ENCODE measurements at regions of chr3 and their contacts with region 1.

Region 1: DNA sequence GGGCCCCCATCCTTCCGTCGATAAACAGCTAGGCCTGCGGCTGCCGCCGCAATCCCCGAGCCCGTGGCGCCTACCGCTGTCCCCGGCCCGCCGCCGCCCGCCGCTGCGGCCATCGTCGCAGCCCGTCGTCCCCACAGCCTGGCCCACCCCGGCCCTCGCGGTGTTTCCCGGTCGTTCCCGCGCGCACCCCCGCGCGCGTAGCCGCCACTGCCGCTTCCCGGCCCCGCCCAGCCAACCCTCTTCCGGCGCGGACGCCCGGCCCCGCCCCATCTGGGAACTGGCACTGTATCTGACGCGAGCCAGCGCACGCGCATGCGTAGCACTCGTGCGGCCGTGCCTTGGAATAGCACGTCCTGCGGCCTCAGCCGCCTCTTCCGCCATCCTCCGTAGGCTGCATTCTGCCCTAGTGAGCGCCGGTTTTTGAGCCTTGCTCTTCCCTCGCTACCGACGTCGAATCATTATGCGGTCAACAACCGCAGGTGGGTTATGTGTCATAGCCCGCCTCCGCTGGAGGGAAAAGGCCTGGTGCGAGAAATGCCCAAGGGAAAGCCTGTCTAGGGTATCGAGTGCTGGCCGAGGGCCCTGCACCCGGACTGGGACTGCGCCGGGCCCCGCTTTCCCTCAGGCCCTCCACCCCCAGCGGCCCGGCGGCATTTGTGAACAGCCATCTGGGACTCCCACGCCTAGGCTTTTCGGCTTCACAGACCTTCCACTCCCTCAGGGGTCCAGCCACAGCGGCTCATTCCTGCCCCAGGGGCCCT is at the start of gene SMARCC1:
- DNase-seq: peak; percentile 98
- H3K4me3 ChIP-seq: peak within 1 kb of the TSS; percentile 89 to 93 (median 89)
- H3K27ac ChIP-seq: peak within 1 kb of the TSS; percentile 88
- H3K4me1 ChIP-seq: peaks cover 13% of the 10 kb centered on the region
- H3K27me3 ChIP-seq: no peaks in the 10 kb centered on the region
- CTCF ChIP-seq: no peak
- total RNA-seq, gene SMARCC1: 52.8 to 94.1 TPM

Region 2: DNA sequence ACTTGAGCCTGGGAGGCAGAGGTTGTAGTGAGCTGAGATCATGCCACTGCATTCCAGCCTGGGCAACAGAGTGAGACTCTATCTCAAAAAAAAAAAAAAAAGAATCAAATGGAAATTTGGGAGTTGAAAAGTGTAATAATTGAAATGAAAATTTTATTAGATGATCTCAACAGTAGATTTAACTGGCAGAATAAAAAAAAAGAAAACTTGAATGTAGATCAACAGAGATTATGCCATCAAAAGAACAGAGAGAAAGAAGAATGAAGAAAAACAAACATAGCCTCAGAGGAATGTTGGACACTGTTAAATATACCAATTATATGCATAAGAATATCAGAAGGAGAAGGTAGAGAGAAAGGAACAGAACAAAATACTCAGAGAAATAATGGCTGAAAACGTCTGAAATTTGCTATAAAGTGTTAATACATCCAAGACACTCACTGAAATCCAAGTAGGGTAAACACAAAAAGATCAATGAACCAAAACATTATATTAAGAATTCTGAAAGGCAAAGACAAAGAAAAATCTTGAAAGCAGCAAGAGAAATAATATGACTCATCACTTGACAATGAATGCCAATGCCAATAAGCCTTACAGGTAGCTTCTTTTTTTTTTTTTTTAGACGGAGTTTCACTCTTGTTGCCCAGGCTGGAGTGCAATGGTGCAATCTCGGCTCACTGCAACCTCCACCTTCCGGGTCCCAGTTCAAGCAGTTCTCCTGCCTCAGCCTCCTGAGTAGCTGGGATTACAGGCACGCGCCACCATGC is 253.7 kb before region 1 on chr3:
- CTCF ChIA-PET with region 1: no interaction called
- dilution Hi-C with region 1: no loop called
- in situ Hi-C with region 1: loop called in 1 of 2 experiments (anchors 5 kb)
- intact Hi-C with region 1: no loop called
- DNase-seq: peak; percentile 56
- H3K4me3 ChIP-seq: no peak overlapping the region
- H3K27ac ChIP-seq: peak overlapping the region; percentile 44
- H3K4me1 ChIP-seq: no peaks in the 10 kb centered on the region
- H3K27me3 ChIP-seq: no peaks in the 10 kb centered on the region
- CTCF ChIP-seq: no peak

Region 3: DNA sequence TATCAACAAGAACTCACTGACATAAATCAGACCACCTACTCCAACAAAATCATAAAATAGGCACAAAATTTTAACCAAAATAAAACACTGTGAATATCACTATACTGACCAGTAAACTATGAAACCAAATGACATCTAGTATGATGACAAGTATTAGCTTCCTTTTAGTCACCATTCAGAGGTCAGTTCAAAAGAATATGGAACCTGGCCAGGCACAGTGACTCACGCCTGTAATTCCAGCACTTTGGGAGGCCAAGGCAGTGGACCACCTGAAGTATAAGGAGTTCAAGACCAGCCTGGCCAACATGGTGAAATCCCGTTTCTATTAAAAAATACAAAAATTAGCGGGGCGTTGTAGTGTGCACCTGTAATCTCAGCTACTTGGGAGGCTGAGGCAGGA is 65.9 kb before region 1 on chr3:
- CTCF ChIA-PET with region 1: no interaction called
- dilution Hi-C with region 1: no loop called
- in situ Hi-C with region 1: no loop called
- intact Hi-C with region 1: loop called (anchors 5 kb)
- DNase-seq: peak; percentile 39
- H3K4me3 ChIP-seq: no peak overlapping the region
- H3K27ac ChIP-seq: no peak overlapping the region
- H3K4me1 ChIP-seq: no peaks in the 10 kb centered on the region
- H3K27me3 ChIP-seq: no peaks in the 10 kb centered on the region
- CTCF ChIP-seq: no peak

Region 4: GRCh38 chr3:47813551-47814177 is 31.8 kb after region 1 on chr3:
- CTCF ChIA-PET with region 1: no interaction called
- dilution Hi-C with region 1: no loop called
- in situ Hi-C with region 1: no loop called
- intact Hi-C with region 1: no loop called
- DNase-seq: no peak
- H3K4me3 ChIP-seq: no peak overlapping the region
- H3K27ac ChIP-seq: no peak overlapping the region
- H3K4me1 ChIP-seq: no peaks in the 10 kb centered on the region
- H3K27me3 ChIP-seq: no peaks in the 10 kb centered on the region
- CTCF ChIP-seq: no peak